B cell (primary cell): ENCODE measurements at regions of chr12 and their contacts with region 1.

Region 1: GRCh38 chr12:104877123-104877705 is 80.9 kb downstream of the SLC41A2 start:
- DNase-seq: peak; percentile 56
- ATAC-seq: no peak
- H3K4me3 ChIP-seq: no peak overlapping the region
- H3K4me3 Mint-ChIP-seq: no peak overlapping the region
- H3K27ac ChIP-seq: no peak overlapping the region
- H3K27ac Mint-ChIP-seq: no peak overlapping the region
- H3K4me1 ChIP-seq: no peaks in the 10 kb centered on the region
- H3K4me1 Mint-ChIP-seq: no peaks in the 10 kb centered on the region
- H3K27me3 ChIP-seq: no peaks in the 10 kb centered on the region
- H3K27me3 Mint-ChIP-seq: no peaks in the 10 kb centered on the region
- CTCF ChIP-seq: peak; percentile 70

Region 2: DNA sequence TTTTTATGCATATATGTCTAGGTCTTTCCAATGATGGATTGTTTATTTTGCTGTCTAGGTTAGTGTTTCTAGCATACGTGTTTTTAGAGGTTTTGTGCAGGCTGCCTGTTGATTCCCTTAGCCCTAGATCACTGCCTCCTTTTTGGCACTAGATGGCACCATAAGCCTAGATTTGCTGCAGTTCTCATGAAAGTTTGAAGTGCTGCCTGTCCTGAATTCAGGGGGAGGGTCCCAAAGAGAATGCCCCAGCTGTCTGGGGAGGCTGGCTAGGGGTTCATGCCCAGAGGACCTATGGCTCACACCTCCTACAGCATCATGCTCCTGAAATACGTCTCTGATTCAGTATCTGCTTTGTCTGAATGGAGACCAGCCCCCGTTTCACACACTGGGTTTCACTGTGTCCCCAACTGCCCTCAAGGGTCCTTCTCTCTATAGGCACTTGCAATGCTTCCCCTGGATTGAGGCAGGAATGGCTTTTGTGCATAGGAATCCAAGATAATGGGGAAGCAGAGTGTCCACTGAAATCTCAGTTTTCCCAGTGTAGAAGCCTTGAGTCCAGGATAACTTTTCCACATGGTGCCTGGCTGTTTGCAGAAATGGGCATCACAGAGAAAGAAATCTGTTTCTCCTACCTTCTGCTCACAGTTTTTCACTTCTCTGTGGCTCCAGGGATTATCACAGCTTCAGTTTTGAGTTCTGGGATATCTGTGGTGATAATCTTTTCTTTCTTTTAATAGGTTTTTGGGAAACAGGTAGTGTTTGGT is 675.8 kb before region 1 on chr12:
- CTCF ChIA-PET with region 1: interaction called, 4 read pairs
- POLR2A ChIA-PET with region 1: no interaction called
- intact Hi-C with region 1: loop called (anchors 5 kb)
- DNase-seq: peak; percentile 79
- ATAC-seq: peak; percentile 73
- H3K4me3 ChIP-seq: no peak overlapping the region
- H3K4me3 Mint-ChIP-seq: no peak overlapping the region
- H3K27ac ChIP-seq: no peak overlapping the region
- H3K27ac Mint-ChIP-seq: no peak overlapping the region
- H3K4me1 ChIP-seq: no peaks in the 10 kb centered on the region
- H3K4me1 Mint-ChIP-seq: peaks cover 1% of the 10 kb centered on the region
- H3K27me3 ChIP-seq: peaks cover 0 to 4% (median 1%) of the 10 kb centered on the region in 4 experiments
- H3K27me3 Mint-ChIP-seq: peaks cover 19% of the 10 kb centered on the region
- CTCF ChIP-seq: peak; percentile 89

Region 3: GRCh38 chr12:104535369-104535768 is 341.8 kb before region 1 on chr12:
- CTCF ChIA-PET with region 1: no interaction called
- POLR2A ChIA-PET with region 1: no interaction called
- intact Hi-C with region 1: no loop called
- DNase-seq: no peak
- ATAC-seq: no peak
- H3K4me3 ChIP-seq: no peak overlapping the region
- H3K4me3 Mint-ChIP-seq: no peak overlapping the region
- H3K27ac ChIP-seq: no peak overlapping the region
- H3K27ac Mint-ChIP-seq: no peak overlapping the region
- H3K4me1 ChIP-seq: peaks cover 47 to 52% of the 10 kb centered on the region in 2 donors
- H3K4me1 Mint-ChIP-seq: peaks cover 82% of the 10 kb centered on the region
- H3K27me3 ChIP-seq: no peaks in the 10 kb centered on the region
- H3K27me3 Mint-ChIP-seq: no peaks in the 10 kb centered on the region
- CTCF ChIP-seq: no peak

Region 4: GRCh38 chr12:104680066-104680465 is 197.1 kb before region 1 on chr12:
- CTCF ChIA-PET with region 1: no interaction called
- POLR2A ChIA-PET with region 1: no interaction called
- intact Hi-C with region 1: loop called (anchors 1 kb)
- DNase-seq: peak; percentile 57
- ATAC-seq: peak; percentile 64
- H3K4me3 ChIP-seq: no peak overlapping the region
- H3K4me3 Mint-ChIP-seq: no peak overlapping the region
- H3K27ac ChIP-seq: peak overlapping the region in 1 of 2 donors; percentile 4
- H3K27ac Mint-ChIP-seq: peak overlapping the region; percentile 79
- H3K4me1 ChIP-seq: peaks cover 46 to 55% of the 10 kb centered on the region in 2 donors
- H3K4me1 Mint-ChIP-seq: peaks cover 79% of the 10 kb centered on the region
- H3K27me3 ChIP-seq: no peaks in the 10 kb centered on the region
- H3K27me3 Mint-ChIP-seq: no peaks in the 10 kb centered on the region
- CTCF ChIP-seq: peak; percentile 15

Region 5: GRCh38 chr12:104775731-104776247 is 101.4 kb before region 1 on chr12:
- CTCF ChIA-PET with region 1: no interaction called
- POLR2A ChIA-PET with region 1: no interaction called
- intact Hi-C with region 1: no loop called
- DNase-seq: no peak
- ATAC-seq: no peak
- H3K4me3 ChIP-seq: no peak overlapping the region
- H3K4me3 Mint-ChIP-seq: no peak overlapping the region
- H3K27ac ChIP-seq: no peak overlapping the region
- H3K27ac Mint-ChIP-seq: no peak overlapping the region
- H3K4me1 ChIP-seq: no peaks in the 10 kb centered on the region
- H3K4me1 Mint-ChIP-seq: no peaks in the 10 kb centered on the region
- H3K27me3 ChIP-seq: peaks cover 0 to 8% (median 5%) of the 10 kb centered on the region in 4 experiments
- H3K27me3 Mint-ChIP-seq: peaks cover 56% of the 10 kb centered on the region
- CTCF ChIP-seq: no peak

Region 6: GRCh38 chr12:105100998-105101397 is 223.8 kb after region 1 on chr12:
- CTCF ChIA-PET with region 1: no interaction called
- POLR2A ChIA-PET with region 1: no interaction called
- intact Hi-C with region 1: no loop called
- DNase-seq: no peak
- ATAC-seq: no peak
- H3K4me3 ChIP-seq: no peak overlapping the region
- H3K4me3 Mint-ChIP-seq: no peak overlapping the region
- H3K27ac ChIP-seq: no peak overlapping the region
- H3K27ac Mint-ChIP-seq: no peak overlapping the region
- H3K4me1 ChIP-seq: peaks cover 0 to 3% of the 10 kb centered on the region in 2 donors
- H3K4me1 Mint-ChIP-seq: peaks cover 1% of the 10 kb centered on the region
- H3K27me3 ChIP-seq: peaks cover 0 to 6% (median 0%) of the 10 kb centered on the region in 4 experiments
- H3K27me3 Mint-ChIP-seq: peaks cover 21% of the 10 kb centered on the region
- CTCF ChIP-seq: no peak

Region 7: DNA sequence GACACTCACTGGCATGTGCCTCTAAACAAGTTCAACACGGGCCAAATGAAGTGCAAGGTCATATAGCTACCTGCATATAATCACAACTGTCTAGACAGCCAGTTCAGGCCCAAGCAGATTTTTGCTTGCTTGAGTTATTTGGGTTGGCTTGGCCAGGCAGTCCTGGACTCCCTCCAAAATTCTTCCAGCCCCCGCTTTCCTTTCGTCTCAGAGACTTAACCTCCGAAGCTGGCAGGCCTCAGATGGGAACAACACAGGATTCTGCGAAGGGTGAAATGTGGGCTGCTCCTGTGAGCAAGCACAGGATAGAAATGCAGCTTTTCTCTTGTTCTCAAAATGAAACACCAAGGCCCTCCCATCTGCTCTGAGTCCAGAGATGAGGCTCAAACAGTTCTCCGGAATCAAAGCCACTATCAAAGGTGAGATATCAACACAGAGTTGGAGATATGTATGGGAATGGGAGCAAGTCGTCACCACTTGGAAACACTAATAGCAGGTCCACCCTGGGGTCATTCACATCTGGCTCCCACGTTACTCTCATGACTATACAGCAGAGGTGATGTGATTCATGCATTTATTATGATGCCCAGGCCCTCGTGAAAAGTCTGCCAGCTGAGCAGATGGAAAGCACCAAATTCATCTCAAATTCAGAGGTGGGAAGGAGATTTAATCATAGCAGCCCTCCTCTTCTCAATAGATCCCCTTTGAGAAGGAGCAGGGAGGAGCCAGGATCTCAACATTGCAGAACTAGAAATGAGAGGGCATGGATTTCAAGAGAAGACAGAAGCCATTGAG is 871.8 kb after region 1 on chr12:
- CTCF ChIA-PET with region 1: no interaction called
- POLR2A ChIA-PET with region 1: no interaction called
- intact Hi-C with region 1: no loop called
- DNase-seq: no peak
- ATAC-seq: no peak
- H3K4me3 ChIP-seq: no peak overlapping the region
- H3K4me3 Mint-ChIP-seq: no peak overlapping the region
- H3K27ac ChIP-seq: no peak overlapping the region
- H3K27ac Mint-ChIP-seq: no peak overlapping the region
- H3K4me1 ChIP-seq: no peaks in the 10 kb centered on the region
- H3K4me1 Mint-ChIP-seq: no peaks in the 10 kb centered on the region
- H3K27me3 ChIP-seq: no peaks in the 10 kb centered on the region
- H3K27me3 Mint-ChIP-seq: no peaks in the 10 kb centered on the region
- CTCF ChIP-seq: no peak